Stomach (tissue), 19 donors: ENCODE measurements at regions of chr18 and their contacts with region 1.

Region 1: GRCh38 chr18:47748847-47749599 is 181.4 kb downstream of the SMAD2 start:
- DNase-seq: peak; percentile 87 to 93
- H3K4me3 ChIP-seq: peak overlapping the region; percentile 26 to 45 (median 38)
- H3K27ac ChIP-seq: no peak overlapping the region
- H3K4me1 ChIP-seq: peaks cover 0 to 12% (median 5%) of the 10 kb centered on the region in 4 donors
- H3K27me3 ChIP-seq: peaks cover 0 to 21% (median 0%) of the 10 kb centered on the region in 3 donors
- CTCF ChIP-seq: peak in 6 of 7 experiments; percentile 41 to 100 (median 93)
- EP300 ChIP-seq: no peak
- POLR2A ChIP-seq: no peak

Region 2: DNA sequence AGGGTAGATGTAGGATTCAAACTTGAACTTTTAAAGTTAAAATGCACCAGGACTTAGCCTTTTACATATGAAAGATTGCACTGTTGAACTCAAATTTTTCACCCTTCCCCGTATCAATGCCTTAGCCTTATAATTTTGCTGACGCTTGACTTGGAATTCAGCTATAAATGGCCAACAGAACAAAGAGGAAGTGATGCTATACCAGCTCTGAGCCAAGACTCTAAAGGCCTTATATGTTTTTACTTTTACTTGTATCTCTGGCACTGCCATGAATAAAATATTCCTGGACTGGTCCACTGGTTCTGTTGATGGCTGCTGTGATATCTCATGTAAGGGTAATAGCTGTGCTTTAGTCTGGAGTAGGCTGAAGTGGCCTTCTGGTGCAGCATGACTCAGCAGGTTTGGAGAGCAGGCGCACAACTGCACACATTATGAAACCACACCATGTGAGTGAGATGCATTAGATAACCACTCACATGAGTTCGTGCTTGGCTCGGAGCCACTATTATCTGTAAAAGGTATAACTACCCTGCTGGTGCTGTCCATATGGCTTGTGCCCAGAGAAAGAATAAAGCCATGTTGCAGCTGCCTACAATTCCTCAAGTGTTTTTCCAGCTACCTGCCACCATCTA is 564.5 kb before region 1 on chr18:
- intact Hi-C with region 1: no loop called
- DNase-seq: peak in 1 of 2 donors; percentile 36
- H3K4me3 ChIP-seq: no peak overlapping the region
- H3K27ac ChIP-seq: no peak overlapping the region
- H3K4me1 ChIP-seq: no peaks in the 10 kb centered on the region
- H3K27me3 ChIP-seq: peaks cover 0 to 10% (median 0%) of the 10 kb centered on the region in 3 donors
- CTCF ChIP-seq: no peak
- EP300 ChIP-seq: no peak
- POLR2A ChIP-seq: no peak

Region 3: DNA sequence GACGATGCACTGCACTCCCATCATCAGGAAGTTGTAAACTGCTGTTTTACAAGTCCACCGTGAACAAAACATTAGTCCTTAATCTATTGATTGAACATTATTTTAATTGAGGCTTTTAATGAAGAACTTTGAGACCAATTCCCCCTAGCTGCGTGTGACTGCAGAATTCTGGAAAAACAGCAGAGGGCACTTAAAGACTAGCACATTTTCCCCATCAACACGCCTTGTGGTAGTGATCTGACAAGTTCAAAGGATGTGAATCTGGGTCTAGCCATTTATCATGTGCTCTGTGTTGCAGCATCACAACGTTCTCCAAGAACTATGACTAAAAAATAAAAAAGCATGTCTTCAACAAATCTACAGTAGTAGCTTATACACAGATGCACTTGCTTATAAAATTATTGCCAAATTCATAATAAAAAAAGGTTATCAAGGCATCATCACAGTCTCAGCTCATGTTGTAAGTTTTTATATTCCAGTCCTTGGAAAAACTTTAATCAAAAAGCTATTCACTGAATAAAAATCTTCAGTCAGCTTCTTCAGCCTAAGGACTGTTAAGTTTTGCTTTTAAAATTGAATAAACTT is 533.4 kb before region 1 on chr18:
- intact Hi-C with region 1: loop called (anchors 5 kb)
- DNase-seq: peak in 1 of 2 donors; percentile 67
- H3K4me3 ChIP-seq: no peak overlapping the region
- H3K27ac ChIP-seq: no peak overlapping the region
- H3K4me1 ChIP-seq: no peaks in the 10 kb centered on the region
- H3K27me3 ChIP-seq: peaks cover 0 to 28% (median 14%) of the 10 kb centered on the region in 3 donors
- CTCF ChIP-seq: peak in 4 of 7 experiments; percentile 23 to 54 (median 39)
- EP300 ChIP-seq: no peak
- POLR2A ChIP-seq: no peak

Region 4: DNA sequence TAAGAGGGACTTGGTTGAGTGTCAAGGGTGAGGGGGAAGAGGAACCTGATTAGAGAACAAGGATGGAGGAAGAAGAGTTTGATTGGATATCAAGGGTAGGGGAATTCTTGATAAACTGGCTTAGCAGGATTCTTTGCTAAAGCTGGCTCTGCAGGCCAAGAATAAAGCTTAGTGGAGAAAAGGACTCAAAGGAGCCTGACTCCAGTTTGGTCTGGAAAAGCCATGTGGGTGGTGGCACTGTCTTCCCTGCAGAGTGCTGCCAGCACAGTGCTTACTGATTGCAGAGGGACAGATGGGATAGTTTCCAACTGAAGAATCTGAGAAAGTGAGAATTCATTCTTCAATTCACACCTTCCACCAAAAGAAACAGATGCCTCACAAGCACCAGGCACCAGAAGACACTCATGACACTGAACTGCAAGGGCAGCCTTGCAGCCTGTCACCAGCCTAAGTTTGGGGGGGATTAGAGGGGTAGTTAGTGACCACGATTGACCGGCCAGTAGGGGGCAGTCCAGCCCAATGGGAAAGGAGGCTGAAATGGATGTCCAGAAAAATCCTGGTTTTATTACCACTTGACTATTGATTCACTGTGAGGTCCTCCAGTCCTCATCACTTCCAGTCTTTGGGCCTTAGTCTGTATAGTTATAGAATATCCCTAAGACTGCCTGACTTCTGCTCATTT is 153.1 kb before region 1 on chr18:
- intact Hi-C with region 1: no loop called
- DNase-seq: peak in 1 of 2 donors; percentile 15
- H3K4me3 ChIP-seq: no peak overlapping the region
- H3K27ac ChIP-seq: no peak overlapping the region
- H3K4me1 ChIP-seq: no peaks in the 10 kb centered on the region
- H3K27me3 ChIP-seq: peaks cover 0 to 18% (median 0%) of the 10 kb centered on the region in 3 donors
- CTCF ChIP-seq: no peak
- EP300 ChIP-seq: no peak
- POLR2A ChIP-seq: no peak

Region 5: GRCh38 chr18:47930931-47931717 is 182.1 kb after region 1 on chr18:
- intact Hi-C with region 1: no loop called
- DNase-seq: peak; percentile 97 to 99
- H3K4me3 ChIP-seq: peak overlapping the region; percentile 79 to 93 (median 83)
- H3K27ac ChIP-seq: peak overlapping the region; percentile 89 to 98 (median 96)
- H3K4me1 ChIP-seq: peaks cover 26 to 55% (median 47%) of the 10 kb centered on the region in 4 donors
- H3K27me3 ChIP-seq: no peaks in the 10 kb centered on the region
- CTCF ChIP-seq: no peak
- EP300 ChIP-seq: no peak
- POLR2A ChIP-seq: no peak

Region 6: DNA sequence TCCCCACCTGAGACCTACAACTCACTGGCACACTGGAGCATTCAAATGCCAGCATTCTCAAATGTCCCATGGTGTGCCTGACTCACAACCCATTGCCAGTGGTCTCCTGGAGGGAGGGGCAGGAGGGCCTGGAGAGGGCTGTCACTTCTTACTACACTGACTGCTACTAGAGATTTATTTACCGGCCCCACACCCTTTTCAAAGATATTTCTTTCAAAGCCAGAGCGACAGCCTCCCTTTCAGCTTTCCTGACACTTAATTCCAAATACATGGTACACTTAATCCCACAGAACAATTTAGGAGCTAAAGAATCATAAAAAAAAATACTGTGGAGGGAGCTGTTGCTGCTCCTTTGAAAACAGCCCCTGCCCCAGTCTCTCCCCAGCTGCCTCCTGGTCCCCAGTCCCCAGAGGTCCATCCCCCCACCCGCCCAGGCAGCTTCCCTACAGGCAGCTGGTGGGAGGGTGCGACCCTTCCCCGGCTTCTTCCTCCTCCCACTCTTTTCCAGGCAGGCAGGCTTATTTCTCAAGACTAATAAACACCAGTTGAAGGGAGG is 310.5 kb after region 1 on chr18:
- intact Hi-C with region 1: no loop called
- DNase-seq: peak in 1 of 2 donors; percentile 47
- H3K4me3 ChIP-seq: no peak overlapping the region
- H3K27ac ChIP-seq: peak overlapping the region in 2 of 5 donors; percentile 32 to 56
- H3K4me1 ChIP-seq: peaks cover 0 to 21% (median 15%) of the 10 kb centered on the region in 4 donors
- H3K27me3 ChIP-seq: no peaks in the 10 kb centered on the region
- CTCF ChIP-seq: no peak
- EP300 ChIP-seq: no peak
- POLR2A ChIP-seq: no peak